Activated CD4-positive, alpha-beta memory T cell treated with anti-CD3 and anti-CD28 coated beads for 36 hours (primary cell): ENCODE measurements at regions of chr1 and their contacts with region 1.

Region 1: DNA sequence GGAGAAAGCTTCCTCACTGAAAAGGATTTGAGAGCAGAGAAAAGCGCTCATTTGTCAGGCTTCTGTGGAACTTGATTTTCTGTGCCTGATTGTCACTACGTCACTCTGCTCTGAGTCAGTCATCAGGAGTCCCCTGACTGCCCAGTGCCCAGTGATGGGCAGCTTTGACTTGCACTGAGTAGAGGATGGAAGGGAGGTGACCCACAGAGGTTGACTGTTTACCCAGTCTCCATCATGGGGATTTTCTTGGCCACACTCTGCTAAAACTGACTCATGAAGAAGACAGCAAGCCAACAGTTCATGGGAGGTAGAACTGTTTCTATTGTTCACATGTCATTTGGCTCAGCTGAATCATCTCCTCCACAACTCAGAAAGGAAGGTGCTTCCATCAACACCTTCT is 82.1 kb upstream of the DUSP10 start:
- DNase-seq: peak; percentile 71
- H3K4me3 Mint-ChIP-seq: no peak overlapping the region
- H3K27ac Mint-ChIP-seq: peak overlapping the region; percentile 50
- H3K4me1 Mint-ChIP-seq: peaks cover 55% of the 10 kb centered on the region
- H3K27me3 Mint-ChIP-seq: no peaks in the 10 kb centered on the region

Region 2: DNA sequence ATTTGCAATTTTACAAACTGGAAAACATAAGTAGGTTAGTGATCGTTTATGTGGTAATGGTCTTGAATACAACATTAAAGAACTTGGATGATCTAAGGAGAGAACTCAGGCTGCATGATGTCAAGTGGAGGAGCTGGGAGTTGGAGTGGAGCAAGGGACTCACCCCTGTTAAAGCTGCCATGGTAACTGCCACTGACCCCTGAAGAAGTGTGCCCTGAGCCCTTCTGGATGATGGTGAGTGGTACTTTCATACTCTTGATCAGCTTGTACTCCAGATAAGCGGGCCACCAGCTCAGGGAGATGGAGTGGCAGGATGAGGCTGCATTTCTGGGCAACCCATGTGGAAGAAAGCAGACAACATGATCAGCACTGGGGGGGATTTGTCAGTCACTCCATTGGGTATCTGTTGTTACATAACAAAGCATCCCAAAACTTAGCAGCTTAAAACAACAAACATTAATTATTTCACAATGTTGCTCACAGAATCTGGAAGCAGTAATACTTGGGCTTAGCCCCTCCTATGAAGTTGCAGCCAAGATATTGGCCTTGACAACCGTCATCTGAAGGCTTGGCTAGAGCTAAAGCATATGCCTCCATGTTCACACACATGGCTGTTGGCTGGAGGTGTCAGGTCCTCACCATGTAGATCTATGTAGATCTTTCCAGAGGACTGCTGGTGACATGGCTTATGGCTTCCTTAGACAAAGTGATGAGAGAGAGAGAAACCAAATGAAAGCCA is 296.0 kb before region 1 on chr1:
- CTCF ChIA-PET with region 1: no interaction called
- POLR2A ChIA-PET with region 1: no interaction called
- intact Hi-C with region 1: no loop called
- DNase-seq: no peak
- H3K4me3 Mint-ChIP-seq: no peak overlapping the region
- H3K27ac Mint-ChIP-seq: no peak overlapping the region
- H3K4me1 Mint-ChIP-seq: no peaks in the 10 kb centered on the region
- H3K27me3 Mint-ChIP-seq: peaks cover 18% of the 10 kb centered on the region

Region 3: DNA sequence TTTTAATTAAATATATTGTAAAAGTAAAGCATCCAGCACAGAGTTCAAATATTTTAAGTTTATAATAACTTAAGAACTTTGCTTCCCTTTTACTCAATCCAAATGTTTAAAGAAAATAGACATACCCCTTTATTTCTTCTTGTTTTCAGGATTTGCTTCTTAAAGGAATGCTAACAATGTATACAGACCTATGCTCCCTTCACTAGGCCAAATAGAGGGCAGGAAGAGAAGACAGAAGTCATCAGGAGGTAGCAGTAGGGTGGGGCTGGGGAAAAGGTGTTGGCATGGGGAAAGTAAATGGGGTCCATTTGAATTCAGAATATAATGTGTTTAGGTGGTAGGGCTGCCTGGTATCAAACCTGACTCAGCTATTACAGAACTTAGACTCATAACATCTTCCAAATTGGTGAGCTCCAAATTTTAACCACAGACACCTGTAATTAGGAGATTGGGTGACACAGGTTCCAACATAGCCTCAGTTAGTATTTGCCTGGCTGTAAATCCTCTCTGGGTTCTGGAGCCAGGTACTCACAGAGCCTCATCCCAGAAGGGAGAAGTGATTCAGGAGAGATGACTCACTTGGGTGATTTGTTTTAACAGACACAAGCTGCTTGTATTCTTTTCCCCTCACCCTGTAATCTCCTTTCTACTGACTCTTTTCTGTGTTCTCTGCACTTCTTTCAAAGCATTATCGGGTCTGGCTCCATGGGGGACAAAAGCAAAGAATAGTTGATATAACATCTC is 22.1 kb before region 1 on chr1:
- CTCF ChIA-PET with region 1: interaction called, 4 read pairs
- POLR2A ChIA-PET with region 1: interaction called, 9 read pairs
- intact Hi-C with region 1: loop called (anchors 1 kb)
- DNase-seq: no peak
- H3K4me3 Mint-ChIP-seq: no peak overlapping the region
- H3K27ac Mint-ChIP-seq: no peak overlapping the region
- H3K4me1 Mint-ChIP-seq: peaks cover 16% of the 10 kb centered on the region
- H3K27me3 Mint-ChIP-seq: no peaks in the 10 kb centered on the region

Region 4: DNA sequence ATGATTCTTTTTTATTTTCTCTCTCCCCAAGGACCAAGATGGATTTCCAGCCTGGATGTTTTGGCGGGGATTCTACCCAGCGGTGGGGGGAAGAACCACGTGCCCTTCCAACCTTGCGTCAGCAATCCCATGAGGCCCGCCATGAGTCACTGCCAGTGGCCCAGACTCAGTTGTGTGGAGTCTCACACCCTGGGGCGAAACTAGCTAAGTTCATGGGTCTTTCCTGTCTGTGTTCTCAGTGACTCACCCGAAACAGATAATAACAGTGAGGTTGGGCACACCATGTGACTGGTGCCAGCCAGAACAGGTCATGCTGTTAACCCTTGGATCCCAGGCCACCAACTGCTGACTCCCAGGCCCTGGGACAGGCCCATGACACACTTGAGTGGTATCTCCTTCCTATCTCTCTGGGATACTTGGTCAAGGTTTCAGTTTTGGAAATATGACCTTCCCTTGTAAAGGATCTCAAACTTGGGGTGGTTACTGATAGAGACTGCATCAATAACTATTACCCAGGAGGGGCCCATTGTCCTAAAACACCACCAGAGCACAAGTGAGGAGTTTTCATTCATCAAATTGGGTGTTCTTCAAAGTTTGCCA is 15.9 kb after region 1 on chr1:
- CTCF ChIA-PET with region 1: interaction called, 3 read pairs
- POLR2A ChIA-PET with region 1: interaction called, 9 read pairs
- intact Hi-C with region 1: loop called (anchors 1 kb)
- DNase-seq: peak; percentile 88
- H3K4me3 Mint-ChIP-seq: no peak overlapping the region
- H3K27ac Mint-ChIP-seq: peak overlapping the region; percentile 74
- H3K4me1 Mint-ChIP-seq: peaks cover 38% of the 10 kb centered on the region
- H3K27me3 Mint-ChIP-seq: peaks cover 6% of the 10 kb centered on the region